Esophagus squamous epithelium (tissue), 5 donors: ENCODE measurements at regions of chr16 and their contacts with region 1.

Region 1: DNA sequence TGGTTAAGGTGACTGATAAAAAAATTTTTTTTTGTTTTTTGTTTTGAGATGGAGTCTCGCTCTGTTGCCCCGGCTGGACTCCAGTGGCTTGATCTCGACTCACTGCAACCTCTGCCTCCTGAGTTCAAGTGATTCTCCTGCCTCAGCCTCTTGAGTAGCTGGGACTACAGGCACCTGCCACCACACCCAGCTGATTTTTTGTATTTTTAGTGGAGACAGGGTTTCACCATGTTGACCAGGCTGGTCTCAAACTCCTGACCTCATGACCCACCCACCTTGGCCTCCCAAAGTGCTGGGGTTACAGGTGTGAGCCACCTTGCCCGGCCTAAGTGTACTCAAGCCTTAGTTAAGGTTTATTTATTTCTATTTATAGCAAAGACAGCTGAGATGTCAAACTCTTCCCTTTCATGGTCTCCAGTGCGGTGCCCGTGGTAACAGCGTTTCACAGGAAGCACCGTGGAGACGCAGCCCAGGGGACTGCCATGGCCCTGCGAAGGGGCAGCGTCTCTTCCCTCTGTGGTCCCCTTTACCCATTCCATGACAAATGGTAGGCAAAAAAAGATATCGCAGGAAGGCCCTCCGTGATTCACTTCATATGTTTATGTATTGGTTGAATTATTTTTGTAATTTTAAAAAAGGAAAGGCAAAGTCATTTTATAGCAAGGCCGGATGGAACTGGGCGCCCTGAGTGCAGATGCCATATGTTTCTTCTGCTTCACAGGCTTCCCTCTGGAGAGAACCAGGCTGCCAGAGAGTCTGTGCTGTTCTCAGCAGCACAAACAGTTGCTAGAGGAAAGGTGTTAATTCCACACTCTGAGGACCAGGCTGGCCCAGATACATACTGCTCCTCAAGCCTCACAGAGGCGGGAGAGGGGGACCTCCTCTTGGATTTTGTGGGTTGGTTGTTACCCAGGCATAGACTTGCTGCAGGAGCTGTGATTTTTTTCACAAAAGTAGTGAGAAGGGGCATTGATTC is 29.2 kb downstream of the DDX19A start:
- DNase-seq: no peak
- H3K4me3 ChIP-seq: no peak overlapping the region
- H3K27ac ChIP-seq: no peak overlapping the region
- H3K4me1 ChIP-seq: peaks cover 12 to 33% (median 19%) of the 10 kb centered on the region in 3 donors
- H3K27me3 ChIP-seq: no peaks in the 10 kb centered on the region
- CTCF ChIP-seq: no peak
- POLR2A ChIP-seq: no peak

Region 2: DNA sequence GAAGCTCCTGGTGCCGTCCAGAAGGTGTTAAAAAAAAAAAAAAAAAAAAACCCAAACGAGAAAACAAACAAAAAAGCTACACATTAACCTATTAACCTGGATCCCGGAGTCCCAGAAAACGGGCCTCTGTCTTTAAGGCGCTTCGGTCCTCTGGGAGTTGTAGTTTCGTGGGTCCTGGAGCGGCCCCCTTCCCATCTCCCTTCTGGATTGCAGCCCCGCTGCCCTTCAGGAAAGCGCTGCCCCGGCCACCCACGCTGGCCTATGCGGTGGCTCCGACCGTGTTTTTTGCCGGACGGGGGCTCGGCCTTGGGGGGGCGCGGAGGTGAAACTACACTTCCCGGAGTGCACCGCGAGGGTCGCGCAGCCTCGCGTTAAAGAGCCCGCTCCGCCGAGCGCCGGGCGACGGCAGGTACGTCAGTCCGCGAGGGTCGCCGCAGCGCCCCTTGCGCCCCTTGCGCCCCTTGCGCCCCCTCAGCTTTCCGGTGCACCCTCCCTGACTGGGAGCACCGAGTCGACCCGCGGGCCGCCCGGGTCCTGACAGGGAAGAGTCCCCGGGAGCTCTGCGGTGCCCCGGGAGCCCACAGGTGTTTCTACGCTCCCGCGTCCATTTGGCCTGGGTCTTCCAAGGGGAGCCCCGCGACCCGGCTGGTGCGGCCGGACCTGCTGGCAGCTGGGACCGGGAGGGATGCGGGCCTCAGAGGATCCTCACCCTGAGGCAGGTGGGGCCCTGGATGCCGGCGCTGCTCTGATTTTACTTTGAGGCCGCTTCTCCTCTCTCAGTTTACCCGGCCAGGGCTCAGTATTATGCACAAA is 78.5 kb after region 1 on chr16 and contains the start of gene FCSK:
- intact Hi-C with region 1: loop called (anchors 10 kb)
- DNase-seq: no peak
- H3K4me3 ChIP-seq: peak within 1 kb of the TSS; percentile 75 to 98 (median 92)
- H3K27ac ChIP-seq: peak within 1 kb of the TSS; percentile 95 to 98 (median 96)
- H3K4me1 ChIP-seq: peaks cover 7 to 22% (median 15%) of the 10 kb centered on the region in 3 donors
- H3K27me3 ChIP-seq: peaks cover 0 to 7% (median 0%) of the 10 kb centered on the region in 4 donors
- CTCF ChIP-seq: no peak
- POLR2A ChIP-seq: peak in 1 of 4 donors; percentile 45
- total RNA-seq, gene FCSK: 10.2 to 13.0 (median 11.0) TPM

Region 3: DNA sequence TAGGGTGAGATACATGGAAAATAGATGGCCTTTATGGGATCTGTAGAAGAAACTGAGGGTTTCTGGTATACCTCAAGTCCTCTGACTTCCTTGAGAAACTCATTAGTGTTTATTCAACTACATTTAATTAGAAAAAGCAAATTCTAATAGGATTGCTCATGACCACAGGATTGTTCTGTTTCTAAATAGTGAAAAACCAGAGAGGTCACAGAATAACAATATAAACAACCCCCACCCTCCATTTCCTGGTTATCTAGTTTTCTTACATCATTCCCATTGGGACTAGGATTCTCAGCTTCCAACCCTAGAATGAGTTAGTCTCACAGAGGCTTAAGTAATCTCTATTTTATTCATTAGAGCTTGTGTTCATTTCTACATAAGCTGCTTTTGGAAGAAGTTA is 177.7 kb after region 1 on chr16:
- intact Hi-C with region 1: no loop called
- DNase-seq: no peak
- H3K4me3 ChIP-seq: no peak overlapping the region
- H3K27ac ChIP-seq: peak overlapping the region in 3 of 4 donors; percentile 49 to 65 (median 50)
- H3K4me1 ChIP-seq: peaks cover 0 to 49% (median 8%) of the 10 kb centered on the region in 3 donors
- H3K27me3 ChIP-seq: no peaks in the 10 kb centered on the region
- CTCF ChIP-seq: no peak
- POLR2A ChIP-seq: no peak